A549 (cell line): ENCODE measurements at regions of chr5 and their contacts with region 1.

Region 1: DNA sequence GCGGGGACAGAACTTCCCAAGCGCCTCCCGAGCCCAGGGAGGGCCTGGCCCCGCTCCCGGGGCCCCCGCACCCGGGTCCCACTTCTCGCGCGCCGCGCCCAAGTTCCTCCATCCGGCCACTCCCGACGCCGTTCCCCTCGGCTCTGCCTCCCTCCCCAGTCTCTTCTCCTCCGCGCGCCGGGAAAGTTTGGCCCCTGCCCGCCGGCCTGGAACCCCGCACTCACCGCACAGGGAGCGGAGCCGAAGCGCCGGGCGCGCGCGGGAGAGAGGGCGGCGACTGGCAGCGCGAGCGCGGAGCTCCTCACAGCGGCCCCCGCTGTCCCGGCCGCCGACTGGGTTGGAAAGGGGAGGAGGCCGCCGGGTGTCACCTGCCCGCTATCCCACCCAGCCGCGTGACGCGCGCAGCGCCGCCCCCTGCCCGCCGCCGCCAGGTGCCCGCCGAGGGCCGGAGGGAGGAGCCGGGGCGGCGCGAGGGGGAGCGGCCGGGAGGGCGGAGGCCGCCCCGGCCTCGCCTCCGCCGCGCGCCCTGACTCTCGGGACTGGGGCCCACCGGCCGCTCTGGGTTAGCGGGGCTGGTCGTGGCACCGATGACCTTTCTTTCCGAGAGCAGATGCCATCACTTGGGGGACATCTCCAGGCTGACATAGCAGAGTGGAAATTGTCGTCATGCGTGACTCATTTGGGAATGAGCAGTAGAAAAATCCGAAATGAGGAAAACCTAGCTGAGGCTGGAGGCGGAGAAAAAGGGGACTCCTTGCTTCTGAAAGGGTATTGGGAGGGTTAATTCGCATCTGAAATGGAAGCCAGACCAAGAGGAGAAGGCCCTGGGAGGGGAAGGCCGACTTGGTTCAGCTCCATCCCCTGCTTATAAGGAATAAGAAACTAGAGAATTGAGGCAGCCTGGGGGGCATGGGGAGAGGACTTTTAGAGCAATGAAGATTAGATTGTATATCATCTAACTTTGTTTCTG is at the start of gene ELOVL7:
- DNase-seq: peak; percentile 56 to 70
- ATAC-seq: peak; percentile 90 to 94
- H3K4me3 ChIP-seq: peak within 1 kb of the TSS; percentile 97
- H3K27ac ChIP-seq: peak within 1 kb of the TSS; percentile 75 to 88
- H3K4me1 ChIP-seq: peaks cover 6% of the 10 kb centered on the region; the same call in 1 of the 3 replicates
- CTCF ChIP-seq: peak; percentile 52
- EP300 ChIP-seq: no peak
- POLR2A ChIP-seq: no peak; the same call in none of the 2 replicates
- RAD21 ChIP-seq: peak; percentile 20 to 58; a peak in 4 of 5 replicates
- polyA plus RNA-seq, gene ELOVL7: 11.7 and 12.3 TPM in 2 replicates

Region 2: GRCh38 chr5:60856066-60856465 is 11.8 kb after region 1 on chr5:
- CTCF ChIA-PET with region 1: interaction called, 17 read pairs
- POLR2A ChIA-PET with region 1: no interaction called
- DNase-seq: no peak
- ATAC-seq: no peak
- H3K4me3 ChIP-seq: no peak overlapping the region
- H3K27ac ChIP-seq: no peak overlapping the region
- H3K4me1 ChIP-seq: no peaks in the 10 kb centered on the region
- CTCF ChIP-seq: no peak
- EP300 ChIP-seq: no peak
- POLR2A ChIP-seq: no peak
- RAD21 ChIP-seq: no peak

Region 3: GRCh38 chr5:60961685-60962084 is 117.5 kb after region 1 on chr5:
- CTCF ChIA-PET with region 1: no interaction called
- POLR2A ChIA-PET with region 1: no interaction called
- DNase-seq: peak in 1 of 2 experiments; percentile 10
- ATAC-seq: no peak
- H3K4me3 ChIP-seq: no peak overlapping the region
- H3K27ac ChIP-seq: no peak overlapping the region
- H3K4me1 ChIP-seq: peaks cover 4% of the 10 kb centered on the region; the same call in 2 of the 3 replicates
- CTCF ChIP-seq: no peak
- EP300 ChIP-seq: no peak
- POLR2A ChIP-seq: no peak
- RAD21 ChIP-seq: no peak